ENCODE measurements at regions of chr22 and their contacts with region 1.

Region 1: DNA sequence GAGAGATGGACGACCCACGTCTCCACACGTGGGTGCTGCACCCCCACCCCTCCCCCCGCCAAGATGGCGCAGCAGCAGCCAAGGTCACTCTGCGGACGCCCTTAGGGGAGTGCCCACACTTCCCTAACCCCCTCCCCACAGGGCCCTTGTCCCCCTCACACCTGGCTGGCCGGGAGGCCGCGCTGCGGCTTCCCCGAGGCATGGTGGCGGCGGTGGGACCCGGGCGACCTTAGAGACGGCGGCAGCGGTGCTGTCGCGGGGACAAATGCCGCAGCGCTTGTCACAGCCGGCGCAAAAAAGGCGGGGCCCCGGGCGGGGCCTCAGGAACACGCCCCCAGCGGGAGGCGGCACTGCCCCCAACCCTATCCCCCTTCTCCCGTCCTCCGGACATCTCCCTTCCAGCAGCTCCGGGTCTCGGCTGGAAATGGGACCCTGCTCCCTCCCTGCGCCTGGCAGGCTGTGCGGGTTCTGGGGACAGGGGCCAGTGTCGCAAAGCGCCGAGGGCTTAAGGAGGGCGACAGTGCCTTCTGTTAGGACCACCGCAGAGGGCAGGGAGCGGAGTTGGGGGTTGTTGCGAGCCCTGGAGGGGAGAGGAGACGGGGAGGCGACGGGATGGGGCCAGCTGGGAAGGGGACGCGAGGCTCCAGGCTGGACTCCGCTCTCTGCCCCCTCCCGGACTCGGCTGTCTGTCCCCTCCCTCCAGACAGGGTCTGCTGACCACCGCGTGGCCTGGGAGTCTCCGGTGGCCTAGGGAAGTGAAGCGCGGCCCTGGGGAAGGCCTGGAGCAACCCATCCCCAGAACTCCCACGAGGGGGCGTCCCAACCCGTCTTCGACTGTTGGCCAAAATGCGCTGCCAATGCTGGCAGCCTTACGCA is at the start of gene CHCHD10:
- DNase-seq: no peak
- H3K4me3 ChIP-seq: peak within 1 kb of the TSS; percentile 67 to 87 (median 82)
- H3K27ac ChIP-seq: no peak within 1 kb of the TSS
- H3K4me1 ChIP-seq: peaks cover 20% of the 10 kb centered on the region
- H3K27me3 ChIP-seq: no peaks in the 10 kb centered on the region
- CTCF ChIP-seq: peak; percentile 56 to 84
- total RNA-seq, gene CHCHD10: 17.3 to 71.6 TPM

Region 2: DNA sequence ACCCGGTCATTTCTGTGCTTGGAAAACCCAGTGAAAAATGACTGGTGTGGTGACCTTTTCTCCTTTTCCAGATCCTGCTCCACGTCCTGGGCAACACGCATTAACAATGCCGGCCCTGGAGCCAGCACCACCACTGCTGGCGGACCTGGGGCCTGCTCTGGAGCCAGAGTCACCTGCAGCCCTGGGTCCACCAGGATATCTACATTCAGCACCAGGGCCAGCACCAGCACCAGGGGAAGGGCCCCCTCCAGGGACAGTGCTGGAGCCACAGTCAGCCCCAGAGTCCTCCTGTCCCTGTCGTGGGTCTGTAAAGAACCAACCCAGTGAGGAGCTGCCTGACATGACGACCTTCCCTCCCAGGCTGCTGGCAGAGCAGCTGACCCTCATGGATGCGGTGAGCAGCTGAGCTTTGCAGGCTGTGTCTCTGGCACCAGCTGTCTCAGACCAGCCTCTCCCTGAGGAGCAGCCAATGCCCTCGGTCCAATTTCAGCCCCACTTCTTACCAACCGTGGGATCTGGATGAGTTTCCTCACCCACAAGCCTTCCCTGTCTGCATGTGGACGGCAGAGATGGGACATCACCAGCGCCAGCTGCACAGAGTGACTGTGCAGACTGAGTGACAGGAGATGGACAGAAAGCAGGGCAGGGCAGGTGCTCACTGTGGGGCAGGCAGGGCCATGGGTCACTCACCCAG is 75.2 kb before region 1 on chr22:
- CTCF ChIA-PET with region 1: no interaction called
- dilution Hi-C with region 1: loop called (anchors 5 kb)
- in situ Hi-C with region 1: no loop called
- intact Hi-C with region 1: no loop called
- DNase-seq: no peak
- H3K4me3 ChIP-seq: no peak overlapping the region
- H3K27ac ChIP-seq: no peak overlapping the region
- H3K4me1 ChIP-seq: no peaks in the 10 kb centered on the region
- H3K27me3 ChIP-seq: no peaks in the 10 kb centered on the region
- CTCF ChIP-seq: no peak

Region 3: GRCh38 chr22:23786752-23787599 is 19.1 kb after region 1 on chr22 and contains the start of gene SMARCB1:
- CTCF ChIA-PET with region 1: interaction called, 10 read pairs
- dilution Hi-C with region 1: no loop called
- in situ Hi-C with region 1: no loop called
- intact Hi-C with region 1: loop called (anchors 2 kb)
- DNase-seq: peak; percentile 86
- H3K4me3 ChIP-seq: peak within 1 kb of the TSS; percentile 51 to 91 (median 67)
- H3K27ac ChIP-seq: peak within 1 kb of the TSS; percentile 88
- H3K4me1 ChIP-seq: peaks cover 26% of the 10 kb centered on the region
- H3K27me3 ChIP-seq: no peaks in the 10 kb centered on the region
- CTCF ChIP-seq: no peak
- total RNA-seq, gene SMARCB1: 63.5 to 93.8 TPM

Region 4: GRCh38 chr22:23800297-23801237 is 32.7 kb after region 1 on chr22:
- CTCF ChIA-PET with region 1: no interaction called
- dilution Hi-C with region 1: loop called (anchors 5 kb)
- in situ Hi-C with region 1: no loop called
- intact Hi-C with region 1: no loop called
- DNase-seq: no peak
- H3K4me3 ChIP-seq: no peak overlapping the region
- H3K27ac ChIP-seq: no peak overlapping the region
- H3K4me1 ChIP-seq: no peaks in the 10 kb centered on the region
- H3K27me3 ChIP-seq: no peaks in the 10 kb centered on the region
- CTCF ChIP-seq: no peak

Region 5: GRCh38 chr22:23838681-23839468 is 71.0 kb after region 1 on chr22 and contains the start of gene DERL3:
- CTCF ChIA-PET with region 1: interaction called, 16 read pairs
- dilution Hi-C with region 1: loop called (anchors 10 kb)
- in situ Hi-C with region 1: no loop called
- intact Hi-C with region 1: no loop called
- DNase-seq: peak; percentile 78
- H3K4me3 ChIP-seq: peak within 1 kb of the TSS in 1 of 3 experiments; percentile 10
- H3K27ac ChIP-seq: no peak within 1 kb of the TSS
- H3K4me1 ChIP-seq: peaks cover 6% of the 10 kb centered on the region
- H3K27me3 ChIP-seq: no peaks in the 10 kb centered on the region
- CTCF ChIP-seq: no peak
- total RNA-seq, gene DERL3: not detected